ENCODE measurements at regions of chr4 and their contacts with region 1.

Region 1: GRCh38 chr4:82462415-82462831 is 32.0 kb downstream of the ENOPH1 start:
- DNase-seq: peak; percentile 79
- H3K4me3 ChIP-seq: no peak overlapping the region
- H3K27ac ChIP-seq: no peak overlapping the region
- H3K27me3 ChIP-seq: no peaks in the 10 kb centered on the region
- CTCF ChIP-seq: peak; percentile 77

Region 2: DNA sequence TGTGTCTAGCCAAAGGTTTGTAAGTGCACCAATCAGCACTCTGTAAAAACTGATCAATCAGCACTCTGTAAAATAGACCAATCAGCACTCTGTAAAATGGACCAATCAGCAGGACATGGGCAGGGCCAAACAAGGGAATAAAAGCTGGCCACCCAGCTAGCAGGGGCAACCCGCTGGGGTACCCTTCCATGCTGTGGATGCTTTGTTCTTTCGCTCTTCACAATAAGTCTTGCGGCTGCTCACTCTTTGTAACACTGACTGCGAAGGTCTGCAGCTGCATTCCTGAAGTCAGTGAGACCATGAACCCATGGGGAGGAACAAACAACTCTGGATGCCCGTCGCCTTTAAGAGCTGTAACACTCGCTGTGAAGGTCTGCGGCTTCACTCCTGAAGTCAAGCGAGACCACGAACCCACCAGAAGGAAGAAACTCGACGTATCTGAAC is 46.5 kb before region 1 on chr4:
- CTCF ChIA-PET with region 1: no interaction called
- POLR2A ChIA-PET with region 1: no interaction called
- DNase-seq: no peak
- H3K4me3 ChIP-seq: no peak overlapping the region
- H3K27ac ChIP-seq: no peak overlapping the region
- H3K27me3 ChIP-seq: no peaks in the 10 kb centered on the region
- CTCF ChIP-seq: no peak

Region 3: GRCh38 chr4:82450966-82451755 is 11.3 kb before region 1 on chr4:
- CTCF ChIA-PET with region 1: interaction called, 14 read pairs
- POLR2A ChIA-PET with region 1: interaction called, 3 read pairs
- DNase-seq: no peak
- H3K4me3 ChIP-seq: no peak overlapping the region
- H3K27ac ChIP-seq: no peak overlapping the region
- H3K27me3 ChIP-seq: no peaks in the 10 kb centered on the region
- CTCF ChIP-seq: no peak

Region 4: DNA sequence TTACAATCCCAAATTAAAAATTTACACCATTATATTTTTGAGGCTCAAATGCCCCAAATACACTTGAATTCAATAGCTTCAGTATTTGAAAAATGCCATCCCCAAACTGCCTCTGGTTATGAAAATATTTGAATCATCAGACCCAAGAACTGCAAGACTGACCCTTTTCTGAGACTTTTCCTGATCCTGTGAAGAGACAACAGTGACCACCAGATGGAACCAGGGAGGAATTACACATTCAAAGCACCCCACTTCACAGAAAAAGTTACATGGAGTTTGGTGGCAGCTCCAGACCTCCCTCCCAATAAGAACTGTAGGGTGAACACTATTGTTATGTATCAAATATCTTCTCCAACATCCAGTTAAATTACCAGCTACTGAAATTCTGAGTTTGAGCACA is 380.2 kb after region 1 on chr4:
- CTCF ChIA-PET with region 1: interaction called, 12 read pairs
- POLR2A ChIA-PET with region 1: no interaction called
- DNase-seq: no peak
- H3K4me3 ChIP-seq: no peak overlapping the region
- H3K27ac ChIP-seq: no peak overlapping the region
- H3K27me3 ChIP-seq: no peaks in the 10 kb centered on the region
- CTCF ChIP-seq: peak; percentile 50

Measured in AG04450 (cell line).